GM13976 (cell line): ENCODE measurements at regions of chr12 and their contacts with region 1.

Region 1: GRCh38 chr12:21697904-21698630 is 40.4 kb upstream of the LDHB start:
- DNase-seq: peak; percentile 32
- CTCF ChIP-seq: peak; percentile 14

Region 2: GRCh38 chr12:21324551-21324950 is 373.5 kb before region 1 on chr12:
- in situ Hi-C with region 1: loop called (anchors 25 kb)
- DNase-seq: no peak
- CTCF ChIP-seq: no peak

Region 3: DNA sequence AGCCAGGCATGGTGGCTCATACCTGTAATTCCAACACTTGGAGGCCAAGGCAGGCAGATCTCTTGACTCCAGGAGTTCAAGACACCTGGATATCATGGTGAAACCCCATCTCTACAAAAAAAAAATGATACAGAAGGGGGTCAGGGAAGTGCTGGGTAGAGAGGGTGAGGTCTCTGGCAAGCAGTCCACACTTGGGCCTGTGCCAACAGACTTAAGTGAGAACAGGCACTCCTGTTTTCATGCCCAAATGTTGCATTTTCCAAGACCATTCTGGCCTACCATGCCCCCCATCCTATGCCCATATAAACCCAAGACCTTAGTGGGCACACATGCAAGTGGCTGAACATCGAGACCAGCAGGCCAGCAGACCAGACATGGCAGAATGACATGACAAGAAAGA is 331.9 kb after region 1 on chr12:
- in situ Hi-C with region 1: no loop called
- DNase-seq: no peak
- CTCF ChIP-seq: no peak

Region 4: GRCh38 chr12:22459838-22460490 is 761.9 kb after region 1 on chr12:
- in situ Hi-C with region 1: loop called (anchors 25 kb)
- DNase-seq: peak; percentile 24
- CTCF ChIP-seq: peak; percentile 22